CD4-positive, alpha-beta memory T cell (primary cell): ENCODE measurements at regions of chr15 and their contacts with region 1.

Region 1: GRCh38 chr15:63600616-63601025 is 3.4 kb downstream of the FBXL22 start:
- DNase-seq: peak; percentile 90 to 95 (median 93)
- H3K4me3 ChIP-seq: peak overlapping the region; percentile 19 to 70
- H3K4me3 Mint-ChIP-seq: peak overlapping the region; percentile 92 to 98 (median 95)
- H3K27ac ChIP-seq: peak overlapping the region; percentile 69
- H3K27ac Mint-ChIP-seq: peak overlapping the region; percentile 94 to 97 (median 96)
- H3K4me1 ChIP-seq: peaks cover 39% of the 10 kb centered on the region
- H3K4me1 Mint-ChIP-seq: peaks cover 26 to 84% (median 47%) of the 10 kb centered on the region in 4 donors
- H3K27me3 ChIP-seq: no peaks in the 10 kb centered on the region
- H3K27me3 Mint-ChIP-seq: no peaks in the 10 kb centered on the region

Region 2: GRCh38 chr15:63473999-63474809 is 126.4 kb before region 1 on chr15:
- CTCF ChIA-PET with region 1: interaction called, 64 read pairs
- POLR2A ChIA-PET with region 1: interaction called, 22 read pairs
- intact Hi-C with region 1: loop called (anchors 1 kb)
- DNase-seq: peak in 4 of 5 donors; percentile 51 to 87 (median 60)
- H3K4me3 ChIP-seq: no peak overlapping the region
- H3K4me3 Mint-ChIP-seq: peak overlapping the region in 6 of 8 donors; percentile 62 to 86 (median 78)
- H3K27ac ChIP-seq: peak overlapping the region; percentile 43
- H3K27ac Mint-ChIP-seq: peak overlapping the region; percentile 87 to 99 (median 97)
- H3K4me1 ChIP-seq: peaks cover 59% of the 10 kb centered on the region
- H3K4me1 Mint-ChIP-seq: peaks cover 38 to 58% (median 54%) of the 10 kb centered on the region in 4 donors
- H3K27me3 ChIP-seq: no peaks in the 10 kb centered on the region
- H3K27me3 Mint-ChIP-seq: no peaks in the 10 kb centered on the region

Region 3: DNA sequence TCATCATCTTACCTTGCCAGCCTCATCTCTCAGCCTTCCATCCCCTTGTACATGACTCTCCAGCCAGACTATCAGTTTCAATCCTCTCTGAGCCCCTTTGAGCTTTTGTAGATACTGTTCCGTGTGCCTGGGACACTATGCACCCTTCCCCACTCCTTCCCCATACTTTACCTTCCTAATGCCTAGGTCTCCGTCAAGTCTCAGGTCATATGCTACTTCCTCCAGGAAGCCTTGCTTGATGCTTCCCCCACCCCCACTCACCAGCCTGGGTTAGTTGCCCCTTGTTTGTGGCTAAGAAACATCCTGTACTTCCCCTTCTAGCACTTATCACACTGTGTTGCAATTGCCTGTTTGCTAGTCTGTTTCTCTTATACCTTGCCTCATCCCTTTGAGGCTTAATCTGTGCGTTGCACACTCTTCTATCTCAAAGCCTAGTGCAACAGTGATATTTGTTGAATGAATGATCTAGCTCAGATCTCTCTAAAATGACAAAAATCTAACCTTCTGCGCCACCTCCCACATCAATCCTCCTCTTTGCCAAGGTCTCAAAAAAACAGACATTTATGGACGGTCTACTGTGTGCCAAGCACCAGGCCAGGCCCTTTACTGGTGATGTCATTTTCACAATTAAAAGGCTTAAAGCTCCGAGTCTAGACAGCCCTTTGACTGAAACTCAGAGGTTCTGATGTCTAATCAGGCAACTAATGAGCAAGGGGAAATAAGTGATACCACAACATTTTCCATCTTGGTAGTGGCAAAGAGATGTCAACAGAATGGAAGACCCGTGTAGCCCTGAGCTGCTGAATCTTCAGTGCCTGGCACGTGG is 102.8 kb before region 1 on chr15:
- CTCF ChIA-PET with region 1: interaction called, 4 read pairs
- POLR2A ChIA-PET with region 1: interaction called, 43 read pairs
- intact Hi-C with region 1: no loop called
- DNase-seq: peak; percentile 81 to 94 (median 83)
- H3K4me3 ChIP-seq: peak overlapping the region in 1 of 2 donors; percentile 42
- H3K4me3 Mint-ChIP-seq: no peak overlapping the region
- H3K27ac ChIP-seq: peak overlapping the region; percentile 81
- H3K27ac Mint-ChIP-seq: no peak overlapping the region
- H3K4me1 ChIP-seq: peaks cover 96% of the 10 kb centered on the region
- H3K4me1 Mint-ChIP-seq: peaks cover 34 to 82% (median 62%) of the 10 kb centered on the region in 4 donors
- H3K27me3 ChIP-seq: no peaks in the 10 kb centered on the region
- H3K27me3 Mint-ChIP-seq: no peaks in the 10 kb centered on the region

Region 4: GRCh38 chr15:63544258-63545026 is 56.2 kb before region 1 on chr15:
- CTCF ChIA-PET with region 1: no interaction called
- POLR2A ChIA-PET with region 1: no interaction called
- intact Hi-C with region 1: loop called (anchors 10 kb)
- DNase-seq: no peak
- H3K4me3 ChIP-seq: no peak overlapping the region
- H3K4me3 Mint-ChIP-seq: peak overlapping the region in 5 of 8 donors; percentile 51 to 58 (median 52)
- H3K27ac ChIP-seq: no peak overlapping the region
- H3K27ac Mint-ChIP-seq: peak overlapping the region; percentile 4 to 81 (median 58)
- H3K4me1 ChIP-seq: peaks cover 29% of the 10 kb centered on the region
- H3K4me1 Mint-ChIP-seq: peaks cover 40 to 69% (median 47%) of the 10 kb centered on the region in 4 donors
- H3K27me3 ChIP-seq: no peaks in the 10 kb centered on the region
- H3K27me3 Mint-ChIP-seq: no peaks in the 10 kb centered on the region

Region 5: GRCh38 chr15:63870403-63871209 is 270.0 kb after region 1 on chr15:
- CTCF ChIA-PET with region 1: no interaction called
- POLR2A ChIA-PET with region 1: no interaction called
- intact Hi-C with region 1: no loop called
- DNase-seq: no peak
- H3K4me3 ChIP-seq: no peak overlapping the region
- H3K4me3 Mint-ChIP-seq: no peak overlapping the region
- H3K27ac ChIP-seq: no peak overlapping the region
- H3K27ac Mint-ChIP-seq: peak overlapping the region in 1 of 7 donors; percentile 0
- H3K4me1 ChIP-seq: no peaks in the 10 kb centered on the region
- H3K4me1 Mint-ChIP-seq: peaks cover 1 to 12% (median 4%) of the 10 kb centered on the region in 4 donors
- H3K27me3 ChIP-seq: no peaks in the 10 kb centered on the region
- H3K27me3 Mint-ChIP-seq: no peaks in the 10 kb centered on the region

Region 6: DNA sequence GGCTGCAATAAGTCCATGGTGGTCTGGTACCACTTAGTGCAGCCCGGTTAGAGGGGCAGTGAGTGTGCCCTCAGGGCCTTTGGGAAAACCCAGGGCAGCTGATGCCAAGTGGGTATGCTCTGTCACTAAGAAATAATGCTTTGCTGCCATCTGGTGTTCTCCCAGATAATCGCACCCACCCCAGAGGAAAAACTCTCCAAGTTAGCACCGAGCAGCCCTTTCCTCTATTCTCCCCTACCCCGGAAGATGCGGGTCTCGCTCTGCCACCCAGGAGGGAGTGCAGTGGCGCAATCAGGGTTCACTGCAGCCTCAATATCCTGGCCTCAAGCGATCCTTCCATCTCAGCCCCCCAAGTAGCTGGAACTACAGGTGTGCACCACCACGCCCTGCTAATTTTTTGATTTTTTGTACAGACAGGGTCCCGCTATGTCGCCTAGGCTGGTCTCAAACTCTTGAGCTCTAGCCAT is 467.0 kb after region 1 on chr15:
- CTCF ChIA-PET with region 1: interaction called, 10 read pairs
- POLR2A ChIA-PET with region 1: interaction called, 3 read pairs
- intact Hi-C with region 1: no loop called
- DNase-seq: peak; percentile 65 to 73 (median 66)
- H3K4me3 ChIP-seq: no peak overlapping the region
- H3K4me3 Mint-ChIP-seq: no peak overlapping the region
- H3K27ac ChIP-seq: no peak overlapping the region
- H3K27ac Mint-ChIP-seq: peak overlapping the region in 3 of 7 donors; percentile 43 to 77 (median 66)
- H3K4me1 ChIP-seq: peaks cover 9% of the 10 kb centered on the region
- H3K4me1 Mint-ChIP-seq: peaks cover 4 to 8% (median 5%) of the 10 kb centered on the region in 4 donors
- H3K27me3 ChIP-seq: no peaks in the 10 kb centered on the region
- H3K27me3 Mint-ChIP-seq: no peaks in the 10 kb centered on the region

Region 7: DNA sequence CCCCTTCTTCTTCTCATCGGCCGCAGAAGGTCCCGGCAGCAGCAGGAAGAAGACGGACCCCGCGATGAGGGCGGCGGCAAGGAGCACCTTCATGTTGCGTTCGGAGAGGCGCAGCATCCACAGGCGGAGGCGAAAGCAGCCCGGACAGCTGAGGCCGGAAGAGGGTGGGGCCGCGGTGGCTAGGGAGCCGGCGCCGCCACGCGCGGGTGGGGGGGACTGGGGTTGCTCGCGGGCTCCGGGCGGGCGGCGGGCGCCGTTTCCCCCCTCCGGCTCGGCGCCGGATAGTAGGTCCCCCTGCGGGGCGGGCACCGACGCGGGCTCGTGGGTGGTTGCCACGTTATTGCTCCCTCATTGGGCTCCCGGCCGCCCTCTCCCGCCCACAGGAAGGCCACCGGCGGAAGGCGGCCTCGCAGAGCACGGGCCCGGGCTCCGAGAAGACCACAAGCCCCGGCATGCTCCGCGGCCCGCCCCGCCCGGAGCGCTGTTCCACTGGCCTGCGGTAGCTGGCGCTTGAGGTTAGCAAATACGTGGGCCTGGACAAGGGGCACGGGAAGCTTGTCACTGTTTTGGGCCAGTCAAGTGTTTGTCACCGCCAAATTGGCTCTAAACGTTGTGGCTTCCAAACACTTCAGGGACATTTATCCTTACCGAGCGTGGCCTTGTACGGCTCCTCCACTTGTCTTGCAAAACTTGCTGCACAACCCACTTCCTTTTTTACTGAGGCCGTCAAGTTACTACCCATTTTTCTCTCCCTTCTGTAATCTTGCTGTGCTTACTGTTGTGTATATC is 562.4 kb after region 1 on chr15 and contains the start of gene PPIB:
- CTCF ChIA-PET with region 1: no interaction called
- POLR2A ChIA-PET with region 1: no interaction called
- intact Hi-C with region 1: loop called (anchors 1 kb)
- DNase-seq: peak; percentile 96 to 98 (median 97)
- H3K4me3 ChIP-seq: peak within 1 kb of the TSS; percentile 68 to 71
- H3K4me3 Mint-ChIP-seq: peak within 1 kb of the TSS; percentile 81 to 95 (median 90)
- H3K27ac ChIP-seq: peak within 1 kb of the TSS; percentile 80
- H3K27ac Mint-ChIP-seq: peak within 1 kb of the TSS; percentile 85 to 98 (median 96)
- H3K4me1 ChIP-seq: peaks cover 54% of the 10 kb centered on the region
- H3K4me1 Mint-ChIP-seq: peaks cover 28 to 53% (median 40%) of the 10 kb centered on the region in 4 donors
- H3K27me3 ChIP-seq: no peaks in the 10 kb centered on the region
- H3K27me3 Mint-ChIP-seq: no peaks in the 10 kb centered on the region
- total RNA-seq, gene PPIB: 247 to 271 TPM